Endothelial cell of umbilical vein (primary cell): ENCODE measurements at regions of chr3 and their contacts with region 1.

Region 1: DNA sequence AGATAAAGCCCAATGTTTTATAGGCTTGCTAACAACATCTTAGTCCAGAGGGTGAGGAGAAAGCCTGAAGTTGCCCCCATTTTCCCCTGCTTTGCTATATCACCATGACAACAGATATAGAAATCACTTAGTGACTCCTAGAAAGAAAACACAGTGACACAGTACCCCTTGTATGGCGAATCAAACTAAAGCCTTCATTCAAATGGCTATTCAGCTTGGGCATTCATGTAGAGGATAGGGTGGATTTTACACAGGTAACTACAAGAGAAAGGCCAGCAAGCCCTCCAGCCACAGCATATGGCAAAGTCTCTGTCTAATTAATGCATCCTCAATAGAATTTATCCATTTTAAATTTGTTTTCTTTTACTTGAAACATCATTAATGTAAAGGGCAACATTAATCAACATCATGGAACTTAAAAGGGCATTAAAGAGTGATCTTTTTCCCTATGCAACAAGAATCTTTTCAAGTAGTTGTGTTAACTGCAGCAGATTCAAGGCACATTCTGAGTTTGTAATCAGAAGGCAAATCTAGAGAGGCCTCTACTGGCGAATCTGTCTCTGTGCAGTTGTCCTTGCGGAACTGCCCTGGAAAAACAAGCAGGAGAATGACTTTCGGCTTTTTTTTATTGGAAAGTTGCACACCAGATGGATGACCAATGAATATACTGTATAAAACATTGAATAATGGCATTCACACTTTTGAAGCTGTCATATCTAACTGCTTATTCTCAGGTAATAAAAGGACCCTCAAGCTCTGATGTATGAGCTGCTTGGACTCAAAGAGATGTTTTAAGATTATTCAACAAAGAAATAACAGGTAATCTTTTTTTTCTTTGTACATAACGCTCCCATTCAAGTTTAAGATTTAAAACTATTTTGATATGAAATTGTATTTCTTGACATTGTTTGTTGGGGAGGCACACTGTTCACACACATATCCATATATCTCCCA is 621.7 kb upstream of the AGTR1 start:
- DNase-seq: peak; percentile 71
- H3K4me3 ChIP-seq: no peak overlapping the region
- H3K27ac ChIP-seq: no peak overlapping the region
- H3K4me1 ChIP-seq: no peaks in the 10 kb centered on the region
- H3K27me3 ChIP-seq: no peaks in the 10 kb centered on the region
- CTCF ChIP-seq: peak; percentile 67 to 78
- POLR2A ChIP-seq: no peak

Region 2: GRCh38 chr3:146817704-146818103 is 1258.3 kb before region 1 on chr3:
- CTCF ChIA-PET with region 1: interaction called, 19 read pairs
- POLR2A ChIA-PET with region 1: no interaction called
- dilution Hi-C with region 1: no loop called
- intact Hi-C with region 1: loop called (anchors 5 kb)
- DNase-seq: peak; percentile 43
- H3K4me3 ChIP-seq: no peak overlapping the region
- H3K27ac ChIP-seq: no peak overlapping the region
- H3K4me1 ChIP-seq: no peaks in the 10 kb centered on the region
- H3K27me3 ChIP-seq: no peaks in the 10 kb centered on the region
- CTCF ChIP-seq: peak in 1 of 2 donors; percentile 31
- POLR2A ChIP-seq: no peak

Region 3: GRCh38 chr3:147391781-147392624 is 684.0 kb before region 1 on chr3:
- CTCF ChIA-PET with region 1: interaction called, 10 read pairs
- POLR2A ChIA-PET with region 1: no interaction called
- dilution Hi-C with region 1: no loop called
- intact Hi-C with region 1: no loop called
- DNase-seq: peak; percentile 22
- H3K4me3 ChIP-seq: no peak overlapping the region
- H3K27ac ChIP-seq: no peak overlapping the region
- H3K4me1 ChIP-seq: peaks cover 6% of the 10 kb centered on the region
- H3K27me3 ChIP-seq: peaks cover 91 to 97% of the 10 kb centered on the region in 2 experiments
- CTCF ChIP-seq: peak in 1 of 2 donors; percentile 21
- POLR2A ChIP-seq: no peak

Region 4: GRCh38 chr3:147521646-147522045 is 554.4 kb before region 1 on chr3:
- CTCF ChIA-PET with region 1: interaction called, 12 read pairs
- POLR2A ChIA-PET with region 1: no interaction called
- dilution Hi-C with region 1: no loop called
- intact Hi-C with region 1: no loop called
- DNase-seq: peak; percentile 32
- H3K4me3 ChIP-seq: no peak overlapping the region
- H3K27ac ChIP-seq: no peak overlapping the region
- H3K4me1 ChIP-seq: peaks cover 7% of the 10 kb centered on the region
- H3K27me3 ChIP-seq: peaks cover 0 to 2% of the 10 kb centered on the region in 2 experiments
- CTCF ChIP-seq: no peak
- POLR2A ChIP-seq: no peak

Region 5: DNA sequence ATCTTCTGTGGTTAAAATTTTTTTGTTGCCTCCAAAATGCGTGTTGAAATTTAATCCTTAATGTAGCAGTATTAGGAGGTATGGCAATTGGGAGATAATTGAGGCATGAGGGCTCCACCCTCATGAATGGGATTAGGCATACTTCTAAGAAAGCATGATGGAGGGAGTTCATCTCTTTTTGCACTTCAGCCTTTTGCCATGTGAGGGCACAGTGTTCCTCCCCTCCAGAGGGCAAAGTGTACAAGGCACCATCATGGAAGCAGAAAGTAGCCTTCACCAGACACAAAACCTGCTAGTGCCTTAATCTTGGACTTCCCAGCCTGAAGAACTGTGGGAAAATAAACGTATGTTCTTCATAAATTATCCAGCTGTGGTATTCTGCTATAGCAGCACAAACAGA is 237.4 kb before region 1 on chr3:
- CTCF ChIA-PET with region 1: interaction called, 10 read pairs
- POLR2A ChIA-PET with region 1: no interaction called
- dilution Hi-C with region 1: no loop called
- intact Hi-C with region 1: loop called (anchors 2 kb)
- DNase-seq: no peak
- H3K4me3 ChIP-seq: no peak overlapping the region
- H3K27ac ChIP-seq: no peak overlapping the region
- H3K4me1 ChIP-seq: no peaks in the 10 kb centered on the region
- H3K27me3 ChIP-seq: no peaks in the 10 kb centered on the region
- CTCF ChIP-seq: no peak
- POLR2A ChIP-seq: no peak

Region 6: DNA sequence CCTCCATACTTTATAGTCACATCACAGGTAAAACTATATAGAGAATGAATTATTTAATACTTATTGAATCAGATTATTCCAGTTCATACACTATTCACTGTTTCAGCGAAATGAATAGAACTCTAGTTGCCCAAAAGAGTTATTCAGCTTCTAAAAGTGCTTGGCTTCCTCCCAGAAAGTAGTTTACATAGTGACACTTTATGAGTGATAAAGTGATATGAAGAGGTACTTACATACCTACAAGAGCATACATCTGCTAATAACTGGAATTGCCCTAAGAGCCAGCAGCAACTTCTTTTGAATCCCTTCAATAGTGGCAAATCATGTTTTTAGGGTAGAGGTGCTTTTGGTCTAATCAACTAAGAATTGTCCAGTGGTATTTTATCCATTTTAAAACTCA is 13.4 kb before region 1 on chr3:
- CTCF ChIA-PET with region 1: interaction called, 11 read pairs
- POLR2A ChIA-PET with region 1: no interaction called
- dilution Hi-C with region 1: no loop called
- intact Hi-C with region 1: no loop called
- DNase-seq: no peak
- H3K4me3 ChIP-seq: no peak overlapping the region
- H3K27ac ChIP-seq: no peak overlapping the region
- H3K4me1 ChIP-seq: peaks cover 3% of the 10 kb centered on the region
- H3K27me3 ChIP-seq: no peaks in the 10 kb centered on the region
- CTCF ChIP-seq: no peak
- POLR2A ChIP-seq: no peak